K562 (cell line): ENCODE measurements at regions of chr11 and their contacts with region 1.

Region 1: DNA sequence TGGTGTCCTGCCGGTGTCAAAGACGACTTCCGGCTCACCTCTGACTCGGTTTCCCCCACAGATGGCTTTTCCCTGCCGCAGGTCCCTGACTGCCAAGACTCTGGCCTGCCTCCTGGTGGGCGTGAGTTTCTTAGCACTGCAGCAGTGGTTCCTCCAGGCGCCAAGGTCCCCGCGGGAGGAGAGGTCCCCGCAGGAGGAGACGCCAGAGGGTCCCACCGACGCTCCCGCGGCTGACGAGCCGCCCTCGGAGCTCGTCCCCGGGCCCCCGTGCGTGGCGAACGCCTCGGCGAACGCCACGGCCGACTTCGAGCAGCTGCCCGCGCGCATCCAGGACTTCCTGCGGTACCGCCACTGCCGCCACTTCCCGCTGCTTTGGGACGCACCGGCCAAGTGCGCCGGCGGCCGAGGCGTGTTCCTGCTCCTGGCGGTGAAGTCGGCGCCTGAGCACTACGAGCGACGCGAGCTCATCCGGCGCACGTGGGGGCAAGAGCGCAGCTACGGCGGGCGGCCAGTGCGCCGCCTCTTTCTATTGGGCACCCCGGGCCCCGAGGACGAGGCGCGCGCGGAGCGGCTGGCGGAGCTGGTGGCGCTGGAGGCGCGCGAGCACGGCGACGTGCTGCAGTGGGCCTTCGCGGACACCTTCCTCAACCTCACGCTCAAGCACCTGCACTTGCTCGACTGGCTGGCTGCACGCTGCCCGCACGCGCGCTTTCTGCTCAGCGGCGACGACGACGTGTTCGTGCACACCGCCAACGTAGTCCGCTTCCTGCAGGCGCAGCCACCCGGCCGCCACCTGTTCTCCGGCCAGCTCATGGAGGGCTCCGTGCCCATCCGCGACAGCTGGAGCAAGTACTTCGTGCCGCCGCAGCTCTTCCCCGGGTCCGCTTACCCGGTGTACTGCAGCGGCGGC is 5.5 kb downstream of the B3GNT6 start:
- DNase-seq: no peak
- ATAC-seq: no peak
- H3K4me3 ChIP-seq: no peak overlapping the region
- H3K27ac ChIP-seq: no peak overlapping the region
- H3K4me1 ChIP-seq: peaks cover 0 to 7% of the 10 kb centered on the region in 2 experiments; a peak in 3 of 5 replicates
- H3K27me3 ChIP-seq: no peaks in the 10 kb centered on the region; a peak in 1 of 5 replicates
- CTCF ChIP-seq: no peak
- EP300 ChIP-seq: no peak
- POLR2A ChIP-seq: no peak
- RAD21 ChIP-seq: no peak

Region 2: DNA sequence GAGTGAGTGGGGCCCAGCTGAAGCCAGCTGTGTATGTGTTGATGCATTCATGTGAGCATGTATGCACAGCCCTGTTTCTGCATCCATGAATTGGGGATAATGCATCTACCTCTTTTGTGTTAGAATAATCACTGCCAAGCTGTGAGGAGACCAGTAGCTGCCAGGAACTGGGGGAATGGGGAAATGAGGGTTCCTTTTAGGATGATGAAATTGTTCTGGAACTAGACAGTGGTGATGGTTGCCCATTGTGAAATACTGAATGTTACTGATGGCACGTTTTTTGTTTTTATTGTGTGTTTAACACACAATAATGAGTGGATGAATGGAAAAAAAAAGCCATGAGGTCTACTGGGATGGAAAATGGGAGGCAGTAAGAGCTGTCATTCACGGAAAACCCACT is 788.2 kb before region 1 on chr11:
- CTCF ChIA-PET with region 1: no interaction called
- POLR2A ChIA-PET with region 1: no interaction called
- in situ Hi-C with region 1: no loop called
- intact Hi-C with region 1: no loop called
- DNase-seq: no peak
- ATAC-seq: no peak
- H3K4me3 ChIP-seq: no peak overlapping the region
- H3K27ac ChIP-seq: no peak overlapping the region
- H3K4me1 ChIP-seq: no peaks in the 10 kb centered on the region
- H3K27me3 ChIP-seq: peaks cover 7 to 53% of the 10 kb centered on the region in 2 experiments; a peak in 4 of 5 replicates
- CTCF ChIP-seq: no peak
- EP300 ChIP-seq: no peak
- POLR2A ChIP-seq: no peak
- RAD21 ChIP-seq: no peak

Region 3: DNA sequence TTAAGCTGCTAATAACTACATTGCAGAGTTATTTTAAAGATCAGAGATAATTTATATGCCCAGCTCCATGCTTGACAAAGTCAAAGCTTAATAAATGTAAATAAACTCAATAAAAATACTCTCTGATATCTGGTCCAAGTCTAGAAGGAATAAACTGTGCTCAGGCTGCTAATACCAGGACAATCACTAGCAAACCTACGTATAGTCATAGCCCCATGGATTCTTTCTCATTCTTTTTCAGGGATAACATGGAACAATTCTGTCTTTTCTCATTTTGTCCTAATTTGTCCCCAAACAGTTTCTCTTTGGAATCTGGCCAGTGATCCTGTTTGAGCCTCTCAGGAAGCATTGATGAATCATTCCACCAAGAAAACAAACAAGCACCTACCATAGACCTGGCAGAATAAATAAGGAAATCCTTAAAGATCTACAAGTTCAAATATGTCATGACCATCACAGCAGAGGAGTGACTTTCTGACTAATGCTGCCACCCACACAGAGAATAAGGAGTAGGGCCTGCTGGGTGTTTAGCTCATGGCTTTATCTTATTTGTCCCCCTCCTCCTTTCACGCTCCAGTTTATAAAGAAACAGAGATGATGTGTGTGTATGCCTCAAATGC is 19.7 kb before region 1 on chr11:
- CTCF ChIA-PET with region 1: no interaction called
- POLR2A ChIA-PET with region 1: interaction called, 11 read pairs
- in situ Hi-C with region 1: no loop called
- intact Hi-C with region 1: no loop called
- DNase-seq: peak in 2 of 4 experiments; percentile 36 to 54
- ATAC-seq: peak; percentile 31; the same call in 1 of the 3 replicates
- H3K4me3 ChIP-seq: no peak overlapping the region
- H3K27ac ChIP-seq: peak overlapping the region; percentile 32; the same call in 1 of the 3 replicates
- H3K4me1 ChIP-seq: peaks cover 0 to 10% of the 10 kb centered on the region in 2 experiments; a peak in 2 of 5 replicates
- H3K27me3 ChIP-seq: no peaks in the 10 kb centered on the region
- CTCF ChIP-seq: no peak
- EP300 ChIP-seq: no peak
- POLR2A ChIP-seq: no peak
- RAD21 ChIP-seq: 0 out of 4 replicates have a peak, but pooled peaks of 1 of the 2 experiments have one; percentile 5

Region 4: GRCh38 chr11:77027270-77027669 is 12.5 kb before region 1 on chr11:
- CTCF ChIA-PET with region 1: no interaction called
- POLR2A ChIA-PET with region 1: interaction called, 17 read pairs
- in situ Hi-C with region 1: no loop called
- intact Hi-C with region 1: no loop called
- DNase-seq: no peak
- ATAC-seq: no peak
- H3K4me3 ChIP-seq: no peak overlapping the region
- H3K27ac ChIP-seq: no peak overlapping the region
- H3K4me1 ChIP-seq: peaks cover 3 to 4% of the 10 kb centered on the region in 2 experiments; a peak in 2 of 5 replicates
- H3K27me3 ChIP-seq: peaks cover 8% of the 10 kb centered on the region in 2 experiments; a peak in 4 of 5 replicates
- CTCF ChIP-seq: no peak
- EP300 ChIP-seq: no peak
- POLR2A ChIP-seq: no peak
- RAD21 ChIP-seq: no peak